ENCODE measurements at regions of chr2 and their contacts with region 1.

Region 1: GRCh38 chr2:205925373-205926337 is 160.3 kb downstream of the INO80D start:
- DNase-seq: peak; percentile 73
- H3K4me3 Mint-ChIP-seq: peak overlapping the region; percentile 38
- H3K27ac Mint-ChIP-seq: no peak overlapping the region
- H3K4me1 Mint-ChIP-seq: no peaks in the 10 kb centered on the region
- H3K27me3 Mint-ChIP-seq: peaks cover 44% of the 10 kb centered on the region
- CTCF ChIP-seq: peak; percentile 93

Region 2: GRCh38 chr2:204260162-204260877 is 1665.3 kb before region 1 on chr2:
- CTCF ChIA-PET with region 1: interaction called, 17 read pairs
- POLR2A ChIA-PET with region 1: no interaction called
- intact Hi-C with region 1: loop called (anchors 1 kb)
- DNase-seq: peak; percentile 71
- H3K4me3 Mint-ChIP-seq: no peak overlapping the region
- H3K27ac Mint-ChIP-seq: no peak overlapping the region
- H3K4me1 Mint-ChIP-seq: peaks cover 6% of the 10 kb centered on the region
- H3K27me3 Mint-ChIP-seq: no peaks in the 10 kb centered on the region
- CTCF ChIP-seq: peak; percentile 81

Region 3: GRCh38 chr2:205761421-205761820 is 164.2 kb before region 1 on chr2:
- CTCF ChIA-PET with region 1: interaction called, 13 read pairs
- POLR2A ChIA-PET with region 1: no interaction called
- intact Hi-C with region 1: no loop called
- DNase-seq: no peak
- H3K4me3 Mint-ChIP-seq: no peak overlapping the region
- H3K27ac Mint-ChIP-seq: no peak overlapping the region
- H3K4me1 Mint-ChIP-seq: no peaks in the 10 kb centered on the region
- H3K27me3 Mint-ChIP-seq: no peaks in the 10 kb centered on the region
- CTCF ChIP-seq: no peak

Region 4: GRCh38 chr2:205814039-205814364 is 111.7 kb before region 1 on chr2:
- CTCF ChIA-PET with region 1: interaction called, 14 read pairs
- POLR2A ChIA-PET with region 1: no interaction called
- intact Hi-C with region 1: no loop called
- DNase-seq: peak; percentile 38
- H3K4me3 Mint-ChIP-seq: no peak overlapping the region
- H3K27ac Mint-ChIP-seq: no peak overlapping the region
- H3K4me1 Mint-ChIP-seq: peaks cover 5% of the 10 kb centered on the region
- H3K27me3 Mint-ChIP-seq: no peaks in the 10 kb centered on the region
- CTCF ChIP-seq: no peak